ENCODE measurements at regions of chr18 and their contacts with region 1.

Region 1: GRCh38 chr18:32018331-32019250 is at the start of gene RNF125:
- DNase-seq: peak; percentile 75 to 95
- H3K4me3 ChIP-seq: peak within 1 kb of the TSS; percentile 55
- CTCF ChIP-seq: no peak
- POLR2A ChIP-seq: no peak
- total RNA-seq, gene RNF125: 6.3 to 16.3 (median 9.2) TPM

Region 2: DNA sequence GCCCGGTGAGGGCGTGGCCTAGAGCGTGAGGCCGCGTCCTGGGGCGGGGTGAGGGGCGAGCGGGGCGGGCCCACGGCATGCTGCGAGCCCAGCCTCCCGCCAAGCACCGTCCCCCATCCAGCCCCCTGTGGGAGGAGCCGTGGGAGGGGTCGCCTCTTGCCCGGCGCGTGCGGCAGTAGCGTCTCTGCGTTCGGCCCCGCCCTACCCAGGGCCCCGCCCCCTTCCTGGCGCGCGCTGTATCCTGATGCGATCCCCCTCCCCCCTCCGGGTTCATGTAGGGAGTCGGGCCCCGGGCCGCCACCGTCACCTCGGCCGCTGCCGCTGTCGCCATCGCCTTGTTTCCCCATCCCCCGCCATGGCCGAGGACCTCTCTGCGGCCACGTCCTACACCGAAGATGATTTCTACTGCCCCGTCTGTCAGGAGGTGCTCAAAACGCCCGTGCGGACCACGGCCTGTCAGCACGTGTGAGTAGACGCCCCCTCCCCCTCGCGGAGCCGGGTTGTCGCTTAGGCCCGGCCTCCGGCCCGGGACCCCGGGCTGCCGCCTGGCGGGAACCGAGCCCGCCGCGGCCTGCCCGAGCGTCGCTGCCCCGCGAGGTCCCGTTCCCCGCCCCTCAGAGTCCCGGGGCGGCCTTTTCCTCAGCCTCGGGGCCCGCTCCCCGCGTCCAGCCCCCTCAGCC is 74.0 kb after region 1 on chr18:
- intact Hi-C with region 1: loop called (anchors 5 kb)
- DNase-seq: peak; percentile 99 to 100
- H3K4me3 ChIP-seq: peak overlapping the region; percentile 71
- CTCF ChIP-seq: no peak
- POLR2A ChIP-seq: no peak